Ascending aorta (tissue), 2 donors: ENCODE measurements at regions of chr1 and their contacts with region 1.

Region 1: GRCh38 chr1:85259118-85259911 is at the start of gene C1orf52:
- DNase-seq: peak; percentile 83 to 98
- H3K4me3 ChIP-seq: peak within 1 kb of the TSS; percentile 70 to 99
- H3K27ac ChIP-seq: peak within 1 kb of the TSS; percentile 86 to 89
- H3K4me1 ChIP-seq: peaks cover 7 to 29% of the 10 kb centered on the region in 2 donors
- H3K27me3 ChIP-seq: no peaks in the 10 kb centered on the region
- CTCF ChIP-seq: peak; percentile 97 to 99 (median 98)
- total RNA-seq, gene C1orf52: 2.3 TPM

Region 2: DNA sequence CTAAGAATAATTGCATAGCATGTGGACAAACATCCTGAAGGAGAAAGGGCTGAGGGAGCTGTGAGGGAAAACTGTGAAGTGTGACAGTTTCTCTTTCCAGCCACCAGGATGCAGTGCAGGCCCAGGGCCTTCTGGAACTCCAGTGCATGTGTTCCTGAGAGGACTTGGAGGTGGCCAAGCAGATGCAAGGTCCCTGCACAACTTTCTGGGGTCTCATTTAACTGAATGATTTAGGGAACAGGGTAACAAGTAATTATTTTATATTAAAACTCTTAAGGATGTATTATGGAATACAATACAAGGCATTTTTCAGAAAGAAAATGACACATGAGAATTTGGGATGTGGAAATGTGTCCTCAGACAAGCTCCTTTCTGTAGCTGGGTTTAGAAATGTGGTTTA is 149.8 kb before region 1 on chr1:
- intact Hi-C with region 1: loop called (anchors 1 kb)
- DNase-seq: peak in 1 of 2 donors; percentile 72
- H3K4me3 ChIP-seq: no peak overlapping the region
- H3K27ac ChIP-seq: no peak overlapping the region
- H3K4me1 ChIP-seq: no peaks in the 10 kb centered on the region
- H3K27me3 ChIP-seq: no peaks in the 10 kb centered on the region
- CTCF ChIP-seq: peak; percentile 68 to 88 (median 70)

Region 3: DNA sequence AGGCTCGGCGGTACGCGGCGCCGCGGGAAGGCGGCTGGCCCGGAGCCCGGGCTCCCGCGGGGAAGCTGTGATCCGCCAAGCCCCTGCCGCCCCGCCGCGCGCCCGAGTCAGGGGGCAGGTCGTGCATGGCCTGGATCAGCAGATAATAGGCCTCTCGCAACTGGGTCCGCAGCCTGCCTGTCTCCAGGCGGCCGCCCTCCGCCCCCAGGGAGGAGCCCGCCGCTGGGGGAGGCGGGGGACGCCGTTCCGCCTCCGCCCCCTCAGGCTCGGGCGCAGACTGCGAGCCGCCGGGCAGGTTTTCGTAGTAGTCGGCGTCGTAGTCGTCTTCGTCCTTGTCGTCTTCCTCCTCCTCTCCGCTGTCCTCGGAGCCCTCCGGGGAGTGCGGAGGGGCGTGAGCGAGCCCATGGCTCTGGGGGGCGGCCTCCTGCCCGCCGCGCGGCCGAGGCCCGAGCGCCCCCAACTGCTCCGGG is 58.4 kb before region 1 on chr1 and contains the start of gene SYDE2:
- intact Hi-C with region 1: loop called (anchors 1 kb)
- DNase-seq: peak; percentile 47 to 88
- H3K4me3 ChIP-seq: peak within 1 kb of the TSS; percentile 76 to 99
- H3K27ac ChIP-seq: peak within 1 kb of the TSS; percentile 96 to 98
- H3K4me1 ChIP-seq: peaks cover 0 to 6% of the 10 kb centered on the region in 2 donors
- H3K27me3 ChIP-seq: no peaks in the 10 kb centered on the region
- CTCF ChIP-seq: no peak
- total RNA-seq, gene SYDE2: 0.43 TPM

Region 4: GRCh38 chr1:85276215-85276977 is 17.1 kb after region 1 on chr1 and contains the start of gene BCL10:
- intact Hi-C with region 1: loop called (anchors 1 kb)
- DNase-seq: peak; percentile 95 to 99
- H3K4me3 ChIP-seq: peak within 1 kb of the TSS; percentile 75 to 82
- H3K27ac ChIP-seq: peak within 1 kb of the TSS; percentile 93 to 97
- H3K4me1 ChIP-seq: peaks cover 8 to 17% of the 10 kb centered on the region in 2 donors
- H3K27me3 ChIP-seq: no peaks in the 10 kb centered on the region
- CTCF ChIP-seq: no peak
- total RNA-seq, gene BCL10: 3.7 TPM